Activated naive CD4-positive, alpha-beta T cell treated with anti-CD3 and anti-CD28 coated beads for 36 hours (primary cell): ENCODE measurements at regions of chr3 and their contacts with region 1.

Region 1: GRCh38 chr3:188683032-188683521 is 488.7 kb upstream of the TPRG1 start:
- DNase-seq: peak; percentile 51
- H3K4me3 Mint-ChIP-seq: no peak overlapping the region
- H3K27ac Mint-ChIP-seq: peak overlapping the region; percentile 37
- H3K4me1 Mint-ChIP-seq: peaks cover 32% of the 10 kb centered on the region
- H3K27me3 Mint-ChIP-seq: no peaks in the 10 kb centered on the region

Region 2: DNA sequence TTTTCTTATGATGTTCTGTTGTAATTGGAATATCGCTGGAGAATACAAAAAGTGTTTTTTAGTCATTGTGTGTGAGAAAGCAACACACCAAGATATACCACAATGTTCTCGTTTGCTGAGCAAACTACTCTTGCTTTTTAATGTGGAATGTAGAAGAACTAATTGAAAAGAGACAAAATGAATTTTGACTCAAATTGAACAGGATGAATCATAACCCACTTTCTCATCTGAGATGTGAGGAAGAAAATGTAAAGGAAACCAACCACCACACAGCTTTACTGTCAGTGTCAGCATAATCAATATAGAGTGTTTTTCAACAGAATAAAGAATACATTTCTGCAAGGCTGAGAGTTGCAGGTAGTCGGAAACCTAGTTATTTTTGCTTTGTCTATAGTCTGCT is 39.9 kb after region 1 on chr3:
- CTCF ChIA-PET with region 1: no interaction called
- intact Hi-C with region 1: loop called (anchors 1 kb)
- DNase-seq: no peak
- H3K4me3 Mint-ChIP-seq: no peak overlapping the region
- H3K27ac Mint-ChIP-seq: no peak overlapping the region
- H3K4me1 Mint-ChIP-seq: peaks cover 26% of the 10 kb centered on the region
- H3K27me3 Mint-ChIP-seq: peaks cover 2% of the 10 kb centered on the region